ENCODE measurements at regions of chr7 and their contacts with region 1.

Region 1: GRCh38 chr7:134458806-134459698 is at the start of gene AKR1B1:
- DNase-seq: peak; percentile 85
- ATAC-seq: peak; percentile 88
- H3K4me3 Mint-ChIP-seq: peak within 1 kb of the TSS; percentile 87
- H3K27ac Mint-ChIP-seq: peak within 1 kb of the TSS; percentile 80
- H3K4me1 Mint-ChIP-seq: peaks cover 39% of the 10 kb centered on the region
- H3K27me3 Mint-ChIP-seq: no peaks in the 10 kb centered on the region
- CTCF ChIP-seq: no peak
- total RNA-seq, gene AKR1B1: 88.9 and 91.0 TPM in 2 replicates

Region 2: GRCh38 chr7:133252858-133253518 is 1206.1 kb before region 1 on chr7 and contains the start of gene EXOC4:
- CTCF ChIA-PET with region 1: no interaction called
- POLR2A ChIA-PET with region 1: no interaction called
- intact Hi-C with region 1: loop called (anchors 2 kb)
- DNase-seq: peak; percentile 67
- ATAC-seq: peak; percentile 100
- H3K4me3 Mint-ChIP-seq: peak within 1 kb of the TSS; percentile 95
- H3K27ac Mint-ChIP-seq: peak within 1 kb of the TSS; percentile 88
- H3K4me1 Mint-ChIP-seq: peaks cover 27% of the 10 kb centered on the region
- H3K27me3 Mint-ChIP-seq: no peaks in the 10 kb centered on the region
- CTCF ChIP-seq: no peak
- total RNA-seq, gene EXOC4: 89.1 and 103 TPM in 2 replicates

Region 3: GRCh38 chr7:134165252-134165651 is 293.8 kb before region 1 on chr7:
- CTCF ChIA-PET with region 1: no interaction called
- POLR2A ChIA-PET with region 1: no interaction called
- intact Hi-C with region 1: no loop called
- DNase-seq: no peak
- ATAC-seq: no peak
- H3K4me3 Mint-ChIP-seq: no peak overlapping the region
- H3K27ac Mint-ChIP-seq: no peak overlapping the region
- H3K4me1 Mint-ChIP-seq: no peaks in the 10 kb centered on the region
- H3K27me3 Mint-ChIP-seq: peaks cover 2% of the 10 kb centered on the region
- CTCF ChIP-seq: no peak

Region 4: DNA sequence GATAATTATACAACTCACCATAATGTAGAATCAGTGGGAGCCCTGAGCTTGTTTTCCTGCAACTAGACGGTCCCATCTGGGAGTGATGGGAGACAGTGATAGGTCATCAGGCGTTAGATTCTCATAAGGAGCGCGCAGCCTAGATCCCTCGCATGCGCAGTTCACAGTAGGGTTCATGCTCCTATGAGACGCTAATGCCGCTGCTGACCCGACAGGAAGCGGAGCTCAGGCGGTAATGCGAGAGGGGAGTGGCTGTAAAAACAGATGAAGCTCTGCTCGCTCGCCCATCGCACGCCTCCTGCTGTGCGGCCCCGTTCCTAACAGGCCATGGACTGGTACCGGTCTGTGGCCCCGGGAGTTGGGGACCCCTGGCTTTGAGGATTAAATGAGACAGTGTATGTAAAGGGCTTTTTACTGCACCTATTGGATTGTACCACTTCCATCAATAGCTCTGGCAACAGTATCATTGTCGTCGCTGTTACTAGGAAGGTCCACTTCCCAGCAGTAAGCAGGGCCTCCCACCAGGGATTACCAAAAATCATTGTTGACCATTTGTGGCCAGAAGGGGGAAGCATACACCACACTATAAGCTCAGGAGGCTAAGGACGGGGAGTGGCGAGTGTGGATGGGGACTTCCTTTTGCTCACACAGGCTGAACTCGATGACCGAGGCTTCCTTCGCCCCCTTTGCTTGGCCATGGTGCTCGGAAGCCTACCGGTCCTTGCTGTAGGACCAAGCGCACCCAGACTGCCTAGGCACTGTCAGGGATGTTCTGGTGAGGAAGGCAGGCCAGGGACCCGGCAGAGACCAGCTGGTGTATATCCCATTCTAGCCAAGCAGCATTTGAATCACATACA is 26.5 kb before region 1 on chr7:
- CTCF ChIA-PET with region 1: interaction called, 22 read pairs
- POLR2A ChIA-PET with region 1: interaction called, 18 read pairs
- intact Hi-C with region 1: loop called (anchors 1 kb)
- DNase-seq: peak; percentile 56
- ATAC-seq: peak; percentile 89
- H3K4me3 Mint-ChIP-seq: peak overlapping the region; percentile 82
- H3K27ac Mint-ChIP-seq: peak overlapping the region; percentile 82
- H3K4me1 Mint-ChIP-seq: peaks cover 20% of the 10 kb centered on the region
- H3K27me3 Mint-ChIP-seq: no peaks in the 10 kb centered on the region
- CTCF ChIP-seq: no peak

Region 5: GRCh38 chr7:134514663-134515062 is 55.6 kb after region 1 on chr7:
- CTCF ChIA-PET with region 1: interaction called, 4 read pairs
- POLR2A ChIA-PET with region 1: no interaction called
- intact Hi-C with region 1: loop called (anchors 1 kb)
- DNase-seq: no peak
- ATAC-seq: peak; percentile 72
- H3K4me3 Mint-ChIP-seq: no peak overlapping the region
- H3K27ac Mint-ChIP-seq: no peak overlapping the region
- H3K4me1 Mint-ChIP-seq: peaks cover 2% of the 10 kb centered on the region
- H3K27me3 Mint-ChIP-seq: peaks cover 6% of the 10 kb centered on the region
- CTCF ChIP-seq: peak; percentile 98

Region 6: GRCh38 chr7:134562136-134562535 is 103.1 kb after region 1 on chr7:
- CTCF ChIA-PET with region 1: no interaction called
- POLR2A ChIA-PET with region 1: no interaction called
- intact Hi-C with region 1: no loop called
- DNase-seq: no peak
- ATAC-seq: no peak
- H3K4me3 Mint-ChIP-seq: no peak overlapping the region
- H3K27ac Mint-ChIP-seq: no peak overlapping the region
- H3K4me1 Mint-ChIP-seq: peaks cover 3% of the 10 kb centered on the region
- H3K27me3 Mint-ChIP-seq: peaks cover 12% of the 10 kb centered on the region
- CTCF ChIP-seq: no peak

Region 7: GRCh38 chr7:135160098-135160857 is 701.2 kb after region 1 on chr7:
- CTCF ChIA-PET with region 1: no interaction called
- POLR2A ChIA-PET with region 1: no interaction called
- intact Hi-C with region 1: loop called (anchors 5 kb)
- DNase-seq: no peak
- ATAC-seq: peak; percentile 20
- H3K4me3 Mint-ChIP-seq: peak overlapping the region; percentile 65
- H3K27ac Mint-ChIP-seq: peak overlapping the region; percentile 93
- H3K4me1 Mint-ChIP-seq: peaks cover 50% of the 10 kb centered on the region
- H3K27me3 Mint-ChIP-seq: no peaks in the 10 kb centered on the region
- CTCF ChIP-seq: no peak

Region 8: GRCh38 chr7:135558337-135558767 is 1099.3 kb after region 1 on chr7:
- CTCF ChIA-PET with region 1: no interaction called
- POLR2A ChIA-PET with region 1: no interaction called
- intact Hi-C with region 1: loop called (anchors 2 kb)
- DNase-seq: peak; percentile 46
- ATAC-seq: peak; percentile 56
- H3K4me3 Mint-ChIP-seq: no peak overlapping the region
- H3K27ac Mint-ChIP-seq: no peak overlapping the region
- H3K4me1 Mint-ChIP-seq: peaks cover 16% of the 10 kb centered on the region
- H3K27me3 Mint-ChIP-seq: no peaks in the 10 kb centered on the region
- CTCF ChIP-seq: peak; percentile 29

Measured in activated B cell treated with CpG ODN at 0.5 μM for 24 hours (primary cell).